Activated CD4-positive, alpha-beta memory T cell treated with anti-CD3 and anti-CD28 coated beads for 36 hours (primary cell): ENCODE measurements at regions of chr7 and their contacts with region 1.

Region 1: GRCh38 chr7:93442478-93443224 is 131.9 kb downstream of the CALCR start:
- DNase-seq: peak; percentile 42
- H3K4me3 Mint-ChIP-seq: no peak overlapping the region
- H3K27ac Mint-ChIP-seq: no peak overlapping the region
- H3K4me1 Mint-ChIP-seq: no peaks in the 10 kb centered on the region
- H3K27me3 Mint-ChIP-seq: no peaks in the 10 kb centered on the region

Region 2: DNA sequence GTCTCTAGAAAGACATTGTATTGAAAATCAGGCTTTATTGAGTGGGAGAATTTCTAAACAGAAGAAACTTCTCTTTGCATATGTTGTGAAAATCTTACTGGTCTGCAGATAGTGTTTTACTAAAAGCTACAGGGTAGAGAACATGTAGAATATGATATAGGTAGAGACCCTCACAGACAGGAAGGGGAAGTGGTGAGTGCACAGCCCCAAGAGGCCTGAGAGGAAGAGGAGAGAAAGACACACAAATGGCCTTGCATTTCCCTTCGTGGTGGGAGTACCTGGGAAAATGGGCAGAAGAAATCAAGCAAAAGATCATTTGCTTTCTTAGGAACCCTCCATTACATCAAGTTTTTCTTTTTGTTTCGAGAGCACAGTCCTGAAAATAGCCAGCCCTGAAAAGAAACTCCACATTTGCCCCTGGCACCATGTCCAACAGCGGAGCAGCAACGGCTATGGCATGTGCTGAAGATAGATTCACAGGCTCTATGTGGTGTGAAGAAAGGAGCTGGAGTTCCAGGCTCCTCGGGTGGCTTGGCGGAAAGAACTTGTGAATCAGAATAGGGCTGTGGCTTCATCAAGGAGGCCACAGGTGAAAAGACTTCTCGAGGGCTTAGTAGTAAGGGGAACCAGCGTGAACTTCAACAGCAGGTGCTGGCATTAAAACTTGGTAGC is 11.6 kb before region 1 on chr7:
- CTCF ChIA-PET with region 1: interaction called, 15 read pairs
- POLR2A ChIA-PET with region 1: no interaction called
- intact Hi-C with region 1: no loop called
- DNase-seq: no peak
- H3K4me3 Mint-ChIP-seq: no peak overlapping the region
- H3K27ac Mint-ChIP-seq: no peak overlapping the region
- H3K4me1 Mint-ChIP-seq: no peaks in the 10 kb centered on the region
- H3K27me3 Mint-ChIP-seq: no peaks in the 10 kb centered on the region

Region 3: DNA sequence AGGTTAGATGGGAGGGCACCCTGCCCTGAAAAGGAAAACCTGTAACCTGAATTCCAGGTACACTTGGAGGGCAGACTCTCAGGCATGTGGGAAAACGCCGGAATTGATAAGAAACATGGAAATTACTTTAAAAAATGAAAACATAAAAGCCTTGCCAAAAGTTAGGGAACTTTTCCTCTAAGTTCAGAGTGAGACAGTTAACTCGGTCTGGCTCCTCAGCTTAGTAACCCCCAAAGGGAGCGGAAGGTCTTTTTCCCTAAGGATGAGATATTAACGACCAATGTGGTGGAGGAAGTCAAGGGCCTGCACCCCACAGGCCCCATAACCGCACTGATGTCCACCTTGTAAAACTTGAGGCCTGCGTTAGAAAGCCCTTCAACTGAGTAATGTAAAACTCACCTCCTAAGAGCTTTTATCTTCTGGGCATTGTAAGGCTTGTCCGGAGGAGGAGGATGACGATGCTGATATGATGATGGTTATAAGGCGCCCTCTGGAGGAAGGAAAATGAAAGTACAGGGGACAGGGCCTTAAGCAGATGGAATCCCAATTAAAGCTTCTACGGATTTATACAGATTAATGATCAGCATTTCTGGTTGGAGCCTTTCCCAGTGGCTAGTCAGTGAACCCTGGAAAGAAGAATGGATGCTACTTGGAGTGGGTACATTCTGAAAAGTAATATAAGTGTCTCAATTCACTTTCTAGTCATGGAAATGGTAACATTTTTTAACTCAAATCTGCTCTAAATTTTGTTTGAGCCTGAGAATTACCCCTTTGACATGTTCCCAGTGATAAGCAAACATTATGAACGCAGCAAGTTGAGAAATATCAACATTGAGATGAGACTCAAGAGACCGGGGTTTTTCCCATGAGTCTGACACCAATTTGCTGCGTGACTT is 952.7 kb after region 1 on chr7:
- CTCF ChIA-PET with region 1: interaction called, 6 read pairs
- POLR2A ChIA-PET with region 1: no interaction called
- intact Hi-C with region 1: loop called (anchors 2 kb)
- DNase-seq: peak; percentile 32
- H3K4me3 Mint-ChIP-seq: no peak overlapping the region
- H3K27ac Mint-ChIP-seq: no peak overlapping the region
- H3K4me1 Mint-ChIP-seq: peaks cover 6% of the 10 kb centered on the region
- H3K27me3 Mint-ChIP-seq: peaks cover 39% of the 10 kb centered on the region